Right cardiac atrium (tissue), 5 donors: ENCODE measurements at regions of chr11 and their contacts with region 1.

Region 1: DNA sequence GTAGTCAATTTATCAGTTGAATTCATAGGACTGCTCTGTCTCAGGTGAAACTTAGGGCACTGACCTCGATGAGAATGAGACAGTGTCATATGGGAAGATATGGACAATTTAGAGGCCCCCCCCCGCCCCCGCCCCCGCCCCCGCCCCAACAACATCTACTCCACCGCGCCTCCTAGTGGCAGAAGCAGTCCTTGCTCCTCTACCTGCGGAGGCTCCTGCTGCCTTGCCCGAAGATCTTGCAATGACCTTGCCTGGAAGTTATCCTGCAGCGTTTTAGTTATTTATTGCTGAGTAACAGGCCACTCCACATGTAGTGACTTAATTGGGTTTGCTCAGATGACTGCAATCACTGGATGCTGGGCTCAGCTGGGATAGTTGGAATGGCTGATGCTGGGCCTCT is 15.2 kb downstream of the SERPINH1 start:
- DNase-seq: peak; percentile 54 to 85 (median 79)
- ATAC-seq: no peak
- H3K4me3 ChIP-seq: no peak overlapping the region
- H3K27ac ChIP-seq: no peak overlapping the region
- H3K4me1 ChIP-seq: no peaks in the 10 kb centered on the region
- H3K27me3 ChIP-seq: no peaks in the 10 kb centered on the region

Region 2: GRCh38 chr11:75547580-75548058 is 29.6 kb before region 1 on chr11:
- intact Hi-C with region 1: loop called in 2 of 4 experiments (anchors 2 to 5 kb)
- DNase-seq: peak; percentile 71 to 90 (median 86)
- ATAC-seq: peak; percentile 86 to 87
- H3K4me3 ChIP-seq: no peak overlapping the region
- H3K27ac ChIP-seq: no peak overlapping the region
- H3K4me1 ChIP-seq: no peaks in the 10 kb centered on the region
- H3K27me3 ChIP-seq: no peaks in the 10 kb centered on the region

Region 3: DNA sequence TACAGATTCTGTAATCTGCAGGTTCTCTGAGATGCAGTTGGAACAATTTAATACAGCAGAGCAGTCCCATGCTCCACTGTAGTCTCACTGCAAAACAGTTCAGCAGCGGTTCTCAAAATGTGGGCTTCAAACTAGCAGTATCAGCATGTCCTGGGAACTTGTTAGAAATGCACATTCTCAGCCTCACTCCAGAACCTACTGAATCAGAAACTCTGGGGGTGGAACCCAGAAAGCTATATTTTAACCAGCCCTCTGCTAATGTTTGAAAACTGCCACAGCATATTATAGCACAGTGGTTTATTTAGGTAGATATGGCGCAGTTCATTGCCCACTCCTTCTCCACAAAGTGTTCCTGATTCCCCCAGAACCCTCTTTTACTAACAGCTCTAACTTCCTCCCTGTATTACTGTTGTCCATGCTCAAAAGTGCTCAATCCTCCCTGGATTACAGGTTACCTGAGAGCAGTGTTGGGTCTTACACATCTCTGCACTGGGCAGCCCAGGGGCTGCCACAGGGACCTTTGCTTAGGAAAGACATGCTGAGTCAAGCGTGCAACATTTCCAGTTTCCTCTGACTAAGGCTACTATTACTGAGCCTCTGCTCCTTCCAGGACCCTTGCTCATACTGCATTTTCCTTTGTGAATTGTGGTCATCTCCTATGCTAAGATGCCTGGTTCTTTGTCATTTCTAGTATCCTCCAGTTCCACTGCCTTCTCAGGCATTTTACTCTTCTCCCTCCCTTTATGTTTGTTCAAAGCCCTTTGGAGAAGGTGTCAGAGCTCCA is 183.7 kb after region 1 on chr11:
- intact Hi-C with region 1: no loop called
- DNase-seq: no peak
- ATAC-seq: no peak
- H3K4me3 ChIP-seq: no peak overlapping the region
- H3K27ac ChIP-seq: no peak overlapping the region
- H3K4me1 ChIP-seq: no peaks in the 10 kb centered on the region
- H3K27me3 ChIP-seq: no peaks in the 10 kb centered on the region